ENCODE measurements at regions of chr14 and their contacts with region 1.

Region 1: GRCh38 chr14:50954811-50955372 is 10.6 kb upstream of the PYGL start:
- DNase-seq: peak in 1 of 2 experiments; percentile 21
- H3K4me3 ChIP-seq: no peak overlapping the region
- H3K4me3 Mint-ChIP-seq: no peak overlapping the region
- H3K27ac Mint-ChIP-seq: peak overlapping the region; percentile 52
- H3K4me1 ChIP-seq: peaks cover 6% of the 10 kb centered on the region; the same call in 1 of the 2 replicates
- H3K4me1 Mint-ChIP-seq: peaks cover 14% of the 10 kb centered on the region
- H3K27me3 ChIP-seq: no peaks in the 10 kb centered on the region
- H3K27me3 Mint-ChIP-seq: no peaks in the 10 kb centered on the region
- CTCF ChIP-seq: peak in 1 of 2 experiments; percentile 58

Region 2: GRCh38 chr14:50882953-50883826 is 71.7 kb before region 1 on chr14:
- CTCF ChIA-PET with region 1: no interaction called
- POLR2A ChIA-PET with region 1: no interaction called
- intact Hi-C with region 1: no loop called
- DNase-seq: peak; percentile 68 to 69
- H3K4me3 ChIP-seq: no peak overlapping the region
- H3K4me3 Mint-ChIP-seq: peak overlapping the region; percentile 41
- H3K27ac Mint-ChIP-seq: no peak overlapping the region
- H3K4me1 ChIP-seq: peaks cover 5% of the 10 kb centered on the region
- H3K4me1 Mint-ChIP-seq: peaks cover 8% of the 10 kb centered on the region
- H3K27me3 ChIP-seq: no peaks in the 10 kb centered on the region
- H3K27me3 Mint-ChIP-seq: no peaks in the 10 kb centered on the region
- CTCF ChIP-seq: no peak

Region 3: DNA sequence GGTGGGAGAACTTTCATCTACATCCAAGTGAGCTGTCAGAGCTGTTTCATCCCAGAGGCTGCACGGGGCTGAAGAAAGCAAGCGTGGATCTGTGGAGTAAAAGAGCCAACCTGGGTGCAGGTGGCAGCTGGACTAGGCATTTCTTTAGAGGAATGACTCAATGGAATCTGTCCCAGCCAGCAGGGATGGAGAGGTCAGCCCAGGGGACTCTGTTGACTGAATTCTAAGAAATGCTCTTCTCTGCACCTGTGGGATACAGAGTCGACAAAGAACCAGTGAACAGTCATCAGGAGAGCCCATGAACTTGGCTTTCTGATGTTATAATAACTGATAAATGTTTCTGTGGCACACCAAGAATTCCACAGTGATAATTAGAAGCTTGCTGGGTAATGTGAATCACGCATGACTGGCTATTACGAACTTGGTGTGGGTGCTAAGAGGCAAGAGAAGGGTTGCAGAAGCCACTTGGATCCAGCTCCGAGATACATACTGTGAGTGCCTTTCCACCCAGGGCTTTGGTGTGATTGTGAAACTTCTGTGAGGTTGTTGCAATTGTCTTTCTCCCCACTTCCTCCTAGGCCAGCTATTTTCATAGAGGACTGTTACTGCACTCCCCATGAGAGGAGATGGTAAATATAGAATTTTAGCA is 26.8 kb before region 1 on chr14:
- CTCF ChIA-PET with region 1: no interaction called
- POLR2A ChIA-PET with region 1: no interaction called
- intact Hi-C with region 1: no loop called
- DNase-seq: no peak
- H3K4me3 ChIP-seq: no peak overlapping the region
- H3K4me3 Mint-ChIP-seq: no peak overlapping the region
- H3K27ac Mint-ChIP-seq: no peak overlapping the region
- H3K4me1 ChIP-seq: peaks cover 11% of the 10 kb centered on the region
- H3K4me1 Mint-ChIP-seq: no peaks in the 10 kb centered on the region
- H3K27me3 ChIP-seq: no peaks in the 10 kb centered on the region
- H3K27me3 Mint-ChIP-seq: no peaks in the 10 kb centered on the region
- CTCF ChIP-seq: no peak

Region 4: DNA sequence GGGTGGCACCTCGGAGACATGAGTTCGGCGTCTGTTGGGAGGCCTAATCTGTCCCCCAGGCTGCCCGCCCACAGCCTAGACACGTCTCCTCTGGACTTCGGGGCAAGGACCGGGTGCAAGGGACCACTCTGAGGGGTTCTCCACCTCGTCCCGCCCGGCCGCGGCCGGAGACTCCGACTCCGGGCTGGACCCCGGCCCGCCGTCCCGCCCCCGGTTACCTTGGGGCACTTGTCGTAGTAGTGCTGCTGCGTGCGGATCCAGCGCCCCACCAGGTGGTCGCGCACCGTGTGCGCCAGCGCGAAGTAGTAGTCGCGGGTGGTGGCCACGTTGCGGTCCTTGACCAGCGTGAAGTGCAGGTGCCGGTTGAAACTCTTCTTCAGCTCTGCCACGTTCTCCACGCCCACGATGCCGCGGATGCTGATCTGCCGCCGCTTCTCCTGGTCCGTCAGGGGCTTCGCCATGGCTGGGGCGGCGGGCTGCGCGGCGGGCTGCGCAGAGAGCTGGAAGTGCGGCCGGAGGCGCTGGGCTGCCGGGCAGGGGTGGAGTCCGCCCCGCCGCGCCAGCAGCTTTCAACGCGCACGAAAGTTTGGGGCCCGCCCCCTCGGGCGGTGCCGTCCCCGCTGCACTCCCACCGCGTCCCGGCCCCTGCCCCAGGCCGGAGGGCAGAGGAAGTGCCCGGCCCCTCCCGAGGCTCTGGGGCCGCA is 10.8 kb before region 1 on chr14 and contains the start of gene PYGL:
- CTCF ChIA-PET with region 1: interaction called, 3 read pairs
- POLR2A ChIA-PET with region 1: interaction called, 14 read pairs
- intact Hi-C with region 1: loop called (anchors 1 kb)
- DNase-seq: peak; percentile 79 to 88
- H3K4me3 ChIP-seq: peak within 1 kb of the TSS; percentile 65
- H3K4me3 Mint-ChIP-seq: peak within 1 kb of the TSS; percentile 96
- H3K27ac Mint-ChIP-seq: peak within 1 kb of the TSS; percentile 77
- H3K4me1 ChIP-seq: peaks cover 6% of the 10 kb centered on the region
- H3K4me1 Mint-ChIP-seq: peaks cover 18% of the 10 kb centered on the region
- H3K27me3 ChIP-seq: no peaks in the 10 kb centered on the region
- H3K27me3 Mint-ChIP-seq: no peaks in the 10 kb centered on the region
- CTCF ChIP-seq: no peak
- total RNA-seq, gene PYGL: 80.8 and 98.1 TPM in 2 replicates

Region 5: GRCh38 chr14:51202914-51203665 is 248.2 kb after region 1 on chr14:
- CTCF ChIA-PET with region 1: no interaction called
- POLR2A ChIA-PET with region 1: no interaction called
- intact Hi-C with region 1: no loop called
- DNase-seq: no peak
- H3K4me3 ChIP-seq: no peak overlapping the region
- H3K4me3 Mint-ChIP-seq: no peak overlapping the region
- H3K27ac Mint-ChIP-seq: no peak overlapping the region
- H3K4me1 ChIP-seq: peaks cover 17% of the 10 kb centered on the region
- H3K4me1 Mint-ChIP-seq: peaks cover 25% of the 10 kb centered on the region
- H3K27me3 ChIP-seq: no peaks in the 10 kb centered on the region
- H3K27me3 Mint-ChIP-seq: no peaks in the 10 kb centered on the region
- CTCF ChIP-seq: no peak

Region 6: DNA sequence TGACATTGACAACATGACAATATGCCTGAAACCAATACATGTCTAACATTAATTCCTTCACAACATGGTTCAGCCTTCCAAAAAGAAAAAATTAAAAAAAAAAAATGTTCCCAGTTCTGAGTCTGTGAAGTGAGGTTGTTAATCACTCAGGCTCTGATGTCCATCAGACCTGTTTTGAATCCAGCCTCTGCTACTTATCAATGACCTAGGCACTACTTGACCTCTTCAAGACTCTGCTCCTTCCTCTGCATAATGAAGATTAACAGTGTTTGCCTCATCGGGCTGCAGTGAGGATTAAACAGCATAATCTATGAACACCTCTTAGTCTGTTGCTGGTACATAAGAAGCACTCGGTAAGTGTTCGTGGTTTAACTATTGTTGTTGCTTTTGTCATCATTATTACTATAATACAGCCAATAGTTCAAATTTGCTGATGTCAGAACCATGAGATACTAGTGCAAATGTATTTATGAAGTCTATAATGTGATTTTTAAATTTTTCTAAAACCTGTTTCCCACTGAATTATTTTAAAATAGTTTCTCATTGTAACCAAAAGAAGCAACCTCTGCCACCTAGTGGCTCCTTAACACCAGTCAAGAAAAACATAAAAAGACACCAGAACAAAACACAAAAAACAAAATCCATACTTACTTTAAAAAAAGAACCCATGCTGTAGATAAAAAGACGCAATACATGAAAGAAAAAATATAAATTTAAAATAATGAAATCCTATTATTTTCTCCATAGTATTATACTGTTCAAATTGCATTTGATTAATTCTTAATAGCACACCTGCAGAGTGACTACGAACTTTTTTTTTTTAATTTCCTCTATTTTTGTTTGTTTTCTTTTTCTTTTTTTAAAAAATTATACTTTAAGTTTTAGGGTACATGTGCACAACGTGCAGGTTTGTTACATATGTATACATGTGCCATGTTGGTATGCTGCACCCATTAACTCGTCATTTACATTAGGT is 264.9 kb after region 1 on chr14:
- CTCF ChIA-PET with region 1: no interaction called
- POLR2A ChIA-PET with region 1: no interaction called
- intact Hi-C with region 1: loop called (anchors 2 kb)
- DNase-seq: no peak
- H3K4me3 ChIP-seq: no peak overlapping the region
- H3K4me3 Mint-ChIP-seq: no peak overlapping the region
- H3K27ac Mint-ChIP-seq: no peak overlapping the region
- H3K4me1 ChIP-seq: no peaks in the 10 kb centered on the region
- H3K4me1 Mint-ChIP-seq: no peaks in the 10 kb centered on the region
- H3K27me3 ChIP-seq: no peaks in the 10 kb centered on the region
- H3K27me3 Mint-ChIP-seq: no peaks in the 10 kb centered on the region
- CTCF ChIP-seq: peak; percentile 50 to 73

Measured in Caco-2 (cell line).